Common myeloid progenitor, CD34-positive (primary cell): ENCODE measurements at regions of chr14 and their contacts with region 1.

Region 1: GRCh38 chr14:21071225-21072030 is 1.3 kb downstream of the ARHGEF40 start:
- DNase-seq: peak; percentile 86 to 94 (median 91)
- H3K4me3 ChIP-seq: peak overlapping the region; percentile 34 to 88 (median 73)
- H3K27ac ChIP-seq: peak overlapping the region; percentile 25 to 73
- H3K4me1 ChIP-seq: peaks cover 8 to 45% (median 42%) of the 10 kb centered on the region in 4 experiments
- H3K27me3 ChIP-seq: peaks cover 0 to 15% (median 6%) of the 10 kb centered on the region in 5 experiments

Region 2: DNA sequence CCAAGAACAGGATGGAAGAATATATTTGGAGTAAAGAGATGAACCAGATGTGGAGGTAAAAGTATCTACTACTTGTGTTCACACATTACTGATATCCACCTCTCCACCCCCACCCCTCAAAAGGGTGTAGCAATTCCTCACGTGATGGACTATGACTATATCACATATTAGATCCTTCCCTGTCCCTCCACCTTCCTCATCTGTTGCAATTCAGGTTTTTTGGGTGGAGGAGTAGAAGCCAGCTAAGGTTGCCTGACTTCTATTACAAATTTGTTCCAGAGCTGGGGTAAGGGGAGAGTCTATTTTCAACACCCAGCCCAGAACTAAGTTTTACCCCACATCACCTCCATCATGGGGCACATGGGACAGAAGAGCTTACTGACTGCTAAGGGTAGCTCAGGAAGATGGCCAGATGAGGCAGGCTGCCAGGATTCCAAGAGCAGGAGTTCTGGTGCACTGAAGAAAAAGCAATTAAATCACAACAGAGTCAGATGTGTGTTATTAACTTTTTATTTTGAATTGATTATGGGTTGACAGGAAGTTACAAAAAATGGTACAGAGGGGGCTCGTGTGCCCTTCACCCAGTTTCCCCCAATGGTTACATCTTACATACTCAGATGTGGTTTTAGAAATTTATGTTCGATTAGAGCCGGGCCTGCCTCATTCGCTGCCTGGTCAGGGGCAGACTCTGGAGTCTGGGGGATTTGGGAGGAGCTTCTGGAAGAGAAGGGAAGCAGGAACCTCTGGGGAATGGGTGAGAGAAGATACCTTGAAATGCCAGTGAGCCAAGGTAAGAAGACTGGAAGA is 38.9 kb before region 1 on chr14:
- CTCF ChIA-PET with region 1: interaction called, 11 read pairs
- POLR2A ChIA-PET with region 1: no interaction called
- DNase-seq: no peak
- H3K4me3 ChIP-seq: no peak overlapping the region
- H3K27ac ChIP-seq: no peak overlapping the region
- H3K4me1 ChIP-seq: peaks cover 0 to 4% (median 1%) of the 10 kb centered on the region in 4 experiments
- H3K27me3 ChIP-seq: peaks cover 0 to 3% (median 0%) of the 10 kb centered on the region in 5 experiments

Region 3: DNA sequence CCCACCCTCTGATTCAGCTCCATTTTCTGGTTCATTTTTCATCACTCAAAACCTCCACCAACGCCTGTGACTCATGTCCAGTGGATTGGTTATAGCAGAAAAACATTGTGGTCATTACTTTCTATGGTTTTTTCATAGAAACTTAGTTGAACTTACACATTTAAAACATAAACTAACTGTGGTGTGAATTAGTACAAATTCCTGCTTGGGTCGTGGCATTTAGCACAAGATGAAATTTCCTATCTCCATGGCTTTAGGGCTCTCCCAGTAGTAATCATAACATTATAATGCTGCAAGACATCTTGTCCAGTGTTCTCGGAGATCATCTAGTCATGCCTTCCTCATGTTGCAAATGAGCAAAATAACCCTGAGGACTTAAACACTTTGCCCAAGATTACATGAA is 22.2 kb before region 1 on chr14:
- CTCF ChIA-PET with region 1: interaction called, 23 read pairs
- POLR2A ChIA-PET with region 1: no interaction called
- DNase-seq: no peak
- H3K4me3 ChIP-seq: no peak overlapping the region
- H3K27ac ChIP-seq: no peak overlapping the region
- H3K4me1 ChIP-seq: peaks cover 5 to 13% (median 11%) of the 10 kb centered on the region in 4 experiments
- H3K27me3 ChIP-seq: no peaks in the 10 kb centered on the region

Region 4: DNA sequence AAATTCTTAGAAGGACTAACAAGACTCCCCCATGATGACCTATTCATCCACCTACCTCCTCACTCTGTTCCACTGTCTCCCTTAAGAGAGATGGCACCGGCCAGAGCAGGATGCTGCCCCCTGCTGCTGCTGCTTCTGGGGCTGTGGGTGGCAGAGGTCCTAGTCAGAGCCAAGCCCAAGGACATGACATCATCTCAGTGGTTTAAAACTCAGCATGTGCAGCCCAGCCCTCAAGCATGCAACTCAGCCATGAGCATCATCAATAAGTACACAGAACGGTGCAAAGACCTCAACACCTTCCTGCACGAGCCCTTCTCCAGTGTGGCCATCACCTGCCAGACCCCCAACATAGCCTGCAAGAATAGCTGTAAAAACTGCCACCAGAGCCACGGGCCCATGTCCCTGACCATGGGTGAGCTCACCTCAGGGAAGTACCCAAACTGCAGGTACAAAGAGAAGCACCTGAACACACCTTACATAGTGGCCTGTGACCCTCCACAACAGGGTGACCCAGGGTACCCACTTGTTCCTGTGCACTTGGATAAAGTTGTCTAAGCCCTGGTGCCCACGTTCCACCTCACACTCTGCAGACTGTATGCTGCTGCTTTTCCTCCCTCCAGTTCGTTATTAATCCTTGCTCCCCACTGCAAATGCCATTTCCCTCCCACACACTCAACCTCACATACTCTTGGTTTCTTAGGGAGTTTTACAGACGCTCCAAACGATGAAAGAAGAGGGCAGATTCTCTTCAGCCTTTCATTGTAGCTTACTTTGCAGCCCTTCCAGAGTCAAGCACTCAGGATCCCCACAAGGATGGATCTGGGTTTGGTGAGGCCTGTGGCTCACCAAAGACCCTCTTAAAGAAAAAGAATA is 13.4 kb before region 1 on chr14 and contains the start of gene RNASE8:
- CTCF ChIA-PET with region 1: interaction called, 28 read pairs
- POLR2A ChIA-PET with region 1: no interaction called
- DNase-seq: peak in 1 of 3 donors; percentile 52
- H3K4me3 ChIP-seq: no peak within 1 kb of the TSS
- H3K27ac ChIP-seq: no peak within 1 kb of the TSS
- H3K4me1 ChIP-seq: no peaks in the 10 kb centered on the region
- H3K27me3 ChIP-seq: peaks cover 0 to 4% (median 0%) of the 10 kb centered on the region in 5 experiments

Region 5: DNA sequence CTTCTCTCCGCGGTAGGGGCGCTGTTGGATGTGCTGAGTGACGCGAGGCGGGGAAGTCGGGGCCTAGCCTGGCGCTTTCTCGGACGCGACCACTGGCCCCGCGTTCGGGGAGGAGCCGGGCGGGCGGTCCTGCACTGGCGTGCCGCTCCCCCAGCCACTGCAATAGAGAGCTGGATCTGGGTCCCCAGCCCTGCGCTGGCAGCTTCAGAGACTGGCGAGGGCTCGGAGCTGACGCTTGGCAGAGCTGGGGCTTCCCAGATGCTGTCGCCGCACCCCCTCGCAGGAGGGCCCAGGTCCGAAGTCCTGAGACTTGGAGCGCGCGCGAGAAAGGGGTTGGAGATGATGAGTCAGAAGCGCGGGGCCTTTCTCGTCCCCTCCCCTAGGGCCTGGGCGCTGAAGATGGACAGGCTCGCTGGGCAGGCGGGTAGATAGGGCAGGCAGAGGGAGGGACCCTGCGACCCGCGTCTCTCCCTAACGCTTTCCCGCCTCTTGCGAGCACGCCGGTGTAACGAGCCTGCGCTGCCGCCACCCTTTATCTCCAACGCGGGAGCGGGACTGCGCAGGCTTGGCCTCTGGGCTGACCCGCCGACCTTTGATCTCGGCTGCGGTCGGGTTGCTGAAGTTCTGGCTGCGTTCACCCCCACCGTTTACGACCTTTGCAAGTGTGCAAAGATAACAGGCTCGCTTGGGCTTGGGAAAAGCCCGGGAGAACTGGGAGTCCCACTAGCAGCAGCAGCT is 32.5 kb after region 1 on chr14:
- CTCF ChIA-PET with region 1: interaction called, 155 read pairs
- POLR2A ChIA-PET with region 1: interaction called, 14 read pairs
- DNase-seq: peak; percentile 94 to 97 (median 96)
- H3K4me3 ChIP-seq: peak overlapping the region; percentile 79 to 89 (median 85)
- H3K27ac ChIP-seq: peak overlapping the region; percentile 98 to 99
- H3K4me1 ChIP-seq: peaks cover 10 to 53% (median 39%) of the 10 kb centered on the region in 4 experiments
- H3K27me3 ChIP-seq: peaks cover 0 to 2% (median 0%) of the 10 kb centered on the region in 5 experiments